ENCODE measurements at regions of chr12 and their contacts with region 1.

Region 1: DNA sequence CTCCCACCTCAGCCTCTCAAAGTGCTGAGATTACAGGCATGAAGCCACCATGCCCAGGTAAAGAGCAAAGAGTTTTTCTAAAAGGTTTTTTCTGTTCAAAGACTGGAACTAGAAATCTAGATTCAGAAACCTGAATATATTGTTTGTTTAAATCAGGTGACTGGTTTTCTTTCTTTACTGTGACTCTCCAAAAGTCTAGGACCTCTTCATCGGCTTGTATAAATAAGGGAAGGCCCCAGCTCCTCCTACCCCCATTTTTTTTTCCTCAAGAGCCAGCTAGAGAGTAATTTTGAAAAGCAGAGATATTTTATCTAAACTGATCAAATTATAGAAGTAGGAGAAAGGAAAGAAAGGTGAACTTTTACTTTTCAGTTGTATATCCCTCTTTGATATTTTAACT is 48.0 kb downstream of the TMEM116 start:
- DNase-seq: no peak
- H3K4me3 Mint-ChIP-seq: no peak overlapping the region
- H3K27ac Mint-ChIP-seq: no peak overlapping the region
- H3K4me1 Mint-ChIP-seq: peaks cover 10% of the 10 kb centered on the region
- H3K27me3 Mint-ChIP-seq: no peaks in the 10 kb centered on the region

Region 2: GRCh38 chr12:111937429-111937828 is 27.5 kb before region 1 on chr12:
- CTCF ChIA-PET with region 1: no interaction called
- POLR2A ChIA-PET with region 1: no interaction called
- DNase-seq: no peak
- H3K4me3 Mint-ChIP-seq: no peak overlapping the region
- H3K27ac Mint-ChIP-seq: no peak overlapping the region
- H3K4me1 Mint-ChIP-seq: no peaks in the 10 kb centered on the region
- H3K27me3 Mint-ChIP-seq: no peaks in the 10 kb centered on the region

Region 3: DNA sequence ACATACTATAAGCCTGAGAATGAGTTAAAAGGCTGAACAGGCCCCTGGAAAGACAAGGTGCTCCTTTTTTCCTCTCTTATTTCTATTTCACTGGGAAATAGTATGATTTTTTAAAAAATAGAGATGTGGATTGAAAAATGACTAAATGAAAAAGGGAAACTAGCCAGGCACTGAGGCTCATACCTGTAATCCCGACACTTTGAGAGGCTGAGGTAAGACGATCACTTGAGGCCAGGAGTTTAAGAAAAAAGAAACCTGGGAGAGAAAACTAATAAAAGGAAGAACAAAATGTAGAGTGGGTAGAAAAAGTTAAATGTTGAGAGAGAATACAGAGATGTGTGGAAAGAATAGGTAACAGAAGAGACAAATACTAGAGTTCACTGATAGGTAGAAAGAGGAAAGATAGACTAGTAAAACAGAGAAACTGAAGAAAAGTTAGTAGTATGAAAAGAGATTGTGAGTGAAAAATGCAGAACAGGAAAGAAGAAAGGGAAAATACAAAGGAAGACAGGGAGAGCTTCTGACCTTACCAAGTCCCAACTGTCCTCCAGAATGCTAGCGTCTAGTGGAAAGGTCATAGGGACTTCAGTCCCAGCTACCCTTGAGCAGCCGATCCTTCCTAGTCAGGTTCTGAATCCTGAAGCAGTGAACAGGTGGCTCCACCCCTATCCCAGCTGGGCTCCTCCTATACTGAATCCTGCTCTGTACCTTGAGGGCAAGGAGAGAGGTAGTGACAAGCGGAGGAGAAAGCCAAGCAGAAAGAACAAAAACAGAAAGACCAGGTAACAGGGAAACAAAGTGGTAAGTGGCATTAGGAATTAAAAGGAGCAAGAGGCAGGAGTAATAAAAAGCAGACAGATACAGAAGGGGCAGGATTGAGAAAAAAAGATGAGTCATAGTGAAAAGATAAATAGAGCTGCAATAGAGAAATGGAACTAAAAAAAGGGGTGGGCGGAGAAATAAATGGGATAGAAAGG is 40.8 kb after region 1 on chr12:
- CTCF ChIA-PET with region 1: no interaction called
- POLR2A ChIA-PET with region 1: interaction called, 12 read pairs
- DNase-seq: no peak
- H3K4me3 Mint-ChIP-seq: no peak overlapping the region
- H3K27ac Mint-ChIP-seq: no peak overlapping the region
- H3K4me1 Mint-ChIP-seq: peaks cover 55% of the 10 kb centered on the region
- H3K27me3 Mint-ChIP-seq: no peaks in the 10 kb centered on the region

Region 4: GRCh38 chr12:112031472-112031871 is 66.5 kb after region 1 on chr12:
- CTCF ChIA-PET with region 1: no interaction called
- POLR2A ChIA-PET with region 1: no interaction called
- DNase-seq: no peak
- H3K4me3 Mint-ChIP-seq: no peak overlapping the region
- H3K27ac Mint-ChIP-seq: no peak overlapping the region
- H3K4me1 Mint-ChIP-seq: peaks cover 4% of the 10 kb centered on the region
- H3K27me3 Mint-ChIP-seq: no peaks in the 10 kb centered on the region